A549 (cell line): ENCODE measurements at regions of chr7 and their contacts with region 1.

Region 1: DNA sequence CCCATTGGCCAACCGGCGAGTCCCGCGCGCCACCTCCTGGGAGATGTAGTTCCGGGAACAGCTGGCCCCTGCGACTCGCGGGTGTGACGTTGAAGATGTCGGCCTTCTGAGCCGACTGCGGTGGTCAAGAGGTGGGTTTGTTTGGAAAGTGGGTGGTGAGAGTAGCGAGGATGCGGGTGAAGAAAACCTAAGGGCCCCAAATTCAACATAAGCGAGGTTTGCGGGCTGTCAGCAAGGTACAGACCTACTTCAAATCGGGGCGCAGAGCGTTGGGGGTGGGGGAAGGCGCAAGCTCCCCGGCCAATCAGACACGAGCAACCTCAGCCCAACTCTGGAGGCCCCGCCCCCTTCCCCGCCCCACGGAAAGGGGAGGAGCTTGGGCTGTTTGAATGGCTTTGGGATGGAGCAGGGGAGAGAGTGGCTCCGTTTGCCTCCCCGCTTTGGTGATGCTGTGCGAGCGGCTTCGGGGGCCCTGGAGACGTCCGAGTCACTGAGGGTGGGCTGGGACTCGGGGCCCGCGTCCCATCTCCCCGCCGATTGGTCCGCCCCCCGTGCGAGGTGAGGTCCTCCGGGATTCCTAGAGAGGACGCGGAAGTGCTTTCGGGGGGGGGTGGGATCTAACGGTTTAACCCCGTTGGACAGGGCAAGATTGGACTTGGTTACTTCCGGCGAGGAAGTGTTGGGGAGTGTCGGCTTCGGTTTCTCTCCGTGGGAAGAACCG is at the start of gene ZKSCAN5:
- DNase-seq: peak; percentile 98
- ATAC-seq: peak; percentile 88 to 94
- H3K4me3 ChIP-seq: peak within 1 kb of the TSS; percentile 95
- H3K27ac ChIP-seq: peak within 1 kb of the TSS; percentile 94 to 97
- H3K4me1 ChIP-seq: peaks cover 16% of the 10 kb centered on the region; the same call in 2 of the 3 replicates
- CTCF ChIP-seq: no peak
- EP300 ChIP-seq: no peak
- POLR2A ChIP-seq: peak; percentile 86
- RAD21 ChIP-seq: no peak
- polyA plus RNA-seq, gene ZKSCAN5: 14.1 and 15.7 TPM in 2 replicates

Region 2: GRCh38 chr7:99472561-99473243 is 32.1 kb before region 1 on chr7 and contains the start of gene ZNF789:
- CTCF ChIA-PET with region 1: interaction called, 4 read pairs
- POLR2A ChIA-PET with region 1: interaction called, 11 read pairs
- DNase-seq: peak; percentile 98 to 99
- ATAC-seq: peak; percentile 98 to 99
- H3K4me3 ChIP-seq: peak within 1 kb of the TSS; percentile 84
- H3K27ac ChIP-seq: peak within 1 kb of the TSS; percentile 83 to 89
- H3K4me1 ChIP-seq: peaks cover 10% of the 10 kb centered on the region; the same call in 1 of the 3 replicates
- CTCF ChIP-seq: no peak
- EP300 ChIP-seq: no peak
- POLR2A ChIP-seq: peak; percentile 55
- RAD21 ChIP-seq: no peak
- polyA plus RNA-seq, gene ZNF789: 11.6 and 12.6 TPM in 2 replicates

Region 3: DNA sequence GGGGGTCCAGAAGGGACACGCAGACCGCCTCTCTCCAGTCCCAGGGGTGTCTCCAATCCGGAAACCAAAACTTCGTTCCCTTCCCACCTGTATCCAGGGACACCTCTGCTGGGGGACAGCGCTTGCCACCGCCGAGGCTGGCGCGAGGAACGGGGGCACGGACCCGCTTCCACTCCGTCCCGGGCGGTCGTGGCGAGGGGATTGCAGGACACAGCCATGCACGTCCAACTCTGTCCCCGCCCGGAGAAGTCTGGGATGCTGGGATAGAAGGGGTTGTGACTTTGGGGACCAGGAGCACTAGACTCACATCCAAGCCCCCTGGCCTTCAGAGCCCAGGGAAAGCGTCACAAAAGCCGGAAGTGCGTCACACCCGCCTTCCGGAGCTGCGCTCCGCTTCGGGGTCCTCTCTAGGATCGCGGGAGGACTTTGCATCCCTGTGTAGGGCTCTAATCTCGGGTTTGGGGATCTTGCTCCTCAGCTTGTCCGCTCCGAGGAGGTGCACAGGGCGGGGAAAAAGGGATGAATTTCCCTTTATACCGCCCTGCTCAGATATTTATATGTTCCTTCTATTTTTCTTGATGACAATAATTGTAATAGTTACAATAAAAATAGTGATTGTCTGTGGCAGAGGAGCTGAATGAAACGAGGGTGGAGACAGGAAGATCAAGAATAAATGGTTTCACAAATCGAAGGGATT is 47.2 kb after region 1 on chr7 and contains the start of gene FAM200A:
- CTCF ChIA-PET with region 1: no interaction called
- POLR2A ChIA-PET with region 1: interaction called, 17 read pairs
- DNase-seq: peak; percentile 95 to 99
- ATAC-seq: peak; percentile 99 to 100
- H3K4me3 ChIP-seq: peak within 1 kb of the TSS; percentile 83
- H3K27ac ChIP-seq: peak within 1 kb of the TSS; percentile 74 to 94
- H3K4me1 ChIP-seq: no peaks in the 10 kb centered on the region; the same call in 2 of the 3 replicates
- CTCF ChIP-seq: no peak
- EP300 ChIP-seq: no peak
- POLR2A ChIP-seq: peak; percentile 73
- RAD21 ChIP-seq: no peak; a peak in 2 of 5 replicates
- polyA plus RNA-seq, gene FAM200A: 7.5 and 9.8 TPM in 2 replicates

Region 4: DNA sequence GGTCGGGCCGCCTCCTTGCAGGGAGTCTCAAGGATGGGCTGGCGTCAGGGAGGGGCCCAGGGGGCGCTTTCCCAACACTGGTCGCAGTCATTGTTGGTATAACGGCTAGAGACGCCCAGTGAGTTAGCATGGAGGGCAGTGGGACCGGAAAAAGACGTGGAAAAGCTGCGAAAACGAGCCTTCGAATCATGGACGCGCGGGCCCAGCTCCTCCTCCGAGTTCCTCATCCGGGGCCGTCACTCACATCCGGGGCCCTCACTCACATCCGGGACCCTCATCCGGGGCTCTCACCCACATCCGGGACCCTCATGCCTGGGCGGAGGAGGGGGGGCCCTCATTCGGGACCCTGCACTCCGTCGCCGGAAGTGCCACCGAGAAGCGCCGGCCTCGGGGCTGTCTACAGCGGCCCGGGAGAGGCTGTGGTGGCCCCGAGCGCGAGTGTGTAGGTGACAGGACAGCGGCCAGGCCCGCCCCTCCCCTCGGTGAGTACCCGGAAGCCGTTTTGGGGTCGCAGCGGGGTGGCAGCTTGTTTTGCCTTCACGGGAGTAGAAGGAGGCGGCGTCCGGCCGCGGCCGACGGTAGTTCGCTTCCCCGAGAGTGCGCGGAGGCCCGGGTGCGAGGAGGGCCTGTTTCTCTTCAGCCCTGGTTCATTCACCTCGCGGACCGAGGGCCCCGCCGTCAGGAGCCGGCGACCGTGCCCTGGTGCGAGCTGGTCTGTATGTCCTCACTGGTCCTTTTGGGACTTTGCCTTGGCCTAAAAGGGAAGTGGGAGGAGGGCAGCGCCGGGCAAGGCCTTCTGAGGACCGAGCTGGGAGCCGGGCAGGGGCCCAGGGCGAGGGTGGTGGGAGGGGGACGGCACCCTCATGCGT is 53.8 kb after region 1 on chr7 and contains the start of gene ZNF655:
- CTCF ChIA-PET with region 1: no interaction called
- POLR2A ChIA-PET with region 1: interaction called, 23 read pairs
- DNase-seq: peak; percentile 94 to 98
- ATAC-seq: peak; percentile 92
- H3K4me3 ChIP-seq: peak within 1 kb of the TSS; percentile 92
- H3K27ac ChIP-seq: peak within 1 kb of the TSS; percentile 91 to 96
- H3K4me1 ChIP-seq: peaks cover 44% of the 10 kb centered on the region
- CTCF ChIP-seq: no peak
- EP300 ChIP-seq: no peak
- POLR2A ChIP-seq: peak; percentile 70
- RAD21 ChIP-seq: no peak
- polyA plus RNA-seq, gene ZNF655: 78.4 and 85.1 TPM in 2 replicates

Region 5: GRCh38 chr7:99918959-99919813 is 414.4 kb after region 1 on chr7 and contains the start of gene TRIM4:
- CTCF ChIA-PET with region 1: no interaction called
- POLR2A ChIA-PET with region 1: interaction called, 11 read pairs
- DNase-seq: peak; percentile 92 to 95
- ATAC-seq: peak; percentile 98 to 100
- H3K4me3 ChIP-seq: peak within 1 kb of the TSS; percentile 81
- H3K27ac ChIP-seq: peak within 1 kb of the TSS; percentile 90 to 98
- H3K4me1 ChIP-seq: peaks cover 13% of the 10 kb centered on the region; the same call in 2 of the 3 replicates
- CTCF ChIP-seq: peak; percentile 9; the same call in 1 of the 3 replicates
- EP300 ChIP-seq: no peak
- POLR2A ChIP-seq: peak; percentile 72
- RAD21 ChIP-seq: peak in 1 of 2 experiments; percentile 29; a peak in 1 of 5 replicates
- polyA plus RNA-seq, gene TRIM4: 33.8 and 34.3 TPM in 2 replicates